IMR-90 (cell line): ENCODE measurements at regions of chr4 and their contacts with region 1.

Region 1: DNA sequence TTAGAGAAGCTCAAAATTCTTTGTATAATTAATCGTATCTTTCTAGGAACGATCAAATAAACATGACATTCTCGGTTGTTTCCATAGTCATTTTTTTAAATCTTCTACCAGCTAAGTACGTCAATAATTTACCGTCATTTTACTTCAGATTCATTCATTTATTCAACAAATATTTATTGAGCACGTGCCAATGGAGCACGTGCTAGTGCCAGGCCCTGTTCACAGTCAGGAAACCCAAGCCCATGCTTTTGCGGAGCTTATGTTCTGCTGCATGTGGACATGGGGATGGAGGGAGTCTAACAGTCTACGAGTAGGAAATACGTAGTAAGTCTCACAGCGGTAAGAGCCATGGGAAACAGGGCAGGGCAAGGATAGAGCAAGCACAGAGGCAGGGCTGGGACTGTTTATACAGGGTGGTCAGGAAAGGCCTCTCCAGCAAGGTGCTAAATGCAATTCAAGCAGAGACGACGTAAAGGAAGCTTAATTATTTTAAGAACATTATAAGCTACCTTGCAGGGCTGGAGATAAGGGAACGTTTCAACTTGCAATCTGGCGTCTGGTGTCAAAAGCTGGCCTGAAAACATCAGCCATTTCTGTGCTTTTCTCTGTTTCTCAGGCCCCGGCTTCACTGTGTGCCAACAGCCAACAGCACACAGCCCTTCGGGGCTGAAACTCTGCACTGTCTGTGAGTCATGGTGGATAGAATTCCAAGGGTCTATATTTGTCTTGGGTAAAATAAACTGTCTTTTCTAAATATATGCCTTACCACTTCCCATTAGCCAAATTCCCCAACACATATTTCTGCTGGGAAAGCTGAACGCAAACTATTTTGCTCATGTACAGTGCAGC is 517.1 kb upstream of the ZFP42 start:
- DNase-seq: peak; percentile 95
- ATAC-seq: peak; percentile 96
- H3K4me3 ChIP-seq: no peak overlapping the region
- H3K27ac ChIP-seq: peak overlapping the region; percentile 75
- H3K4me1 ChIP-seq: peaks cover 23% of the 10 kb centered on the region
- H3K27me3 ChIP-seq: no peaks in the 10 kb centered on the region
- CTCF ChIP-seq: no peak
- POLR2A ChIP-seq: no peak
- RAD21 ChIP-seq: peak; percentile 26; the same call in 1 of the 2 replicates

Region 2: GRCh38 chr4:186946682-186947294 is 531.7 kb before region 1 on chr4:
- CTCF ChIA-PET with region 1: no interaction called
- POLR2A ChIA-PET with region 1: no interaction called
- dilution Hi-C with region 1: no loop called
- in situ Hi-C with region 1: no loop called
- intact Hi-C with region 1: loop called (anchors 10 kb)
- DNase-seq: peak; percentile 34
- ATAC-seq: no peak
- H3K4me3 ChIP-seq: no peak overlapping the region
- H3K27ac ChIP-seq: no peak overlapping the region
- H3K4me1 ChIP-seq: peaks cover 7% of the 10 kb centered on the region
- H3K27me3 ChIP-seq: no peaks in the 10 kb centered on the region
- CTCF ChIP-seq: peak; percentile 31
- POLR2A ChIP-seq: no peak
- RAD21 ChIP-seq: peak; percentile 42

Region 3: GRCh38 chr4:187227907-187228704 is 250.4 kb before region 1 on chr4:
- CTCF ChIA-PET with region 1: no interaction called
- POLR2A ChIA-PET with region 1: no interaction called
- dilution Hi-C with region 1: no loop called
- in situ Hi-C with region 1: no loop called
- intact Hi-C with region 1: loop called (anchors 5 kb)
- DNase-seq: peak; percentile 40
- ATAC-seq: peak; percentile 89
- H3K4me3 ChIP-seq: no peak overlapping the region
- H3K27ac ChIP-seq: no peak overlapping the region
- H3K4me1 ChIP-seq: peaks cover 3% of the 10 kb centered on the region; the same call in 1 of the 2 replicates
- H3K27me3 ChIP-seq: no peaks in the 10 kb centered on the region
- CTCF ChIP-seq: no peak
- POLR2A ChIP-seq: no peak
- RAD21 ChIP-seq: no peak